ENCODE measurements at regions of chr3 and their contacts with region 1.

Region 1: GRCh38 chr3:111691293-111691909 is 96.3 kb upstream of the ZBED2 start:
- DNase-seq: peak; percentile 47
- H3K4me3 ChIP-seq: no peak overlapping the region; a peak in 1 of 4 replicates
- H3K27ac ChIP-seq: peak overlapping the region in 1 of 2 experiments; percentile 75; a peak in 2 of 4 replicates
- H3K4me1 ChIP-seq: peaks cover 3 to 37% of the 10 kb centered on the region in 2 experiments
- H3K27me3 ChIP-seq: no peaks in the 10 kb centered on the region
- CTCF ChIP-seq: peak; percentile 74
- EP300 ChIP-seq: no peak
- RAD21 ChIP-seq: peak; percentile 74

Region 2: DNA sequence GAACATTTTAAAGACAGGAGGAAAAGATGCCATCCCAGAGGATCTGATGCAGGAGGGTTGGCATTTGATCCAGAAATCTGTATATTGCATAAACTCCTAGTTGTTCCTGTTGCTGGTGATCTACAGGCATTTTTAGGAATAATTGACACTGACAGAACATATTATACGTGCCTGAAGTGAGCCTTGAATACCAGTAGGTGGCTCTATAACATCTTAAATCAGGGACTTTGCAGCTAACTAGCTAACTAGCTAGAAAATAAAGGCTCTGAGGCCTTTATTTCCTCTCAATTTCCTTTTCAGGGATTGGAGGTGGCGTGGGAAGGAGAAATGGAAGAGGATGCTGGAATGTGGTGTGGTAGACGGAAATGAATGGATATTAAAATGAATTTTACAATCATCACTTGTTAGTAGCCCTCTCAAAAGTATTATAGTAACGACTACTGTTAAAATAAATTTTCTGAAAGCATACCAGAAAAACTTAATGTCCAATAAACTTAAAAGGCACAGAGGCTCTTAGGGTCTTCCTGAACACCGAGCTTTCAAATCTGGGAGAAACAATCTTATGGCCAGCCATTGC is 22.4 kb before region 1 on chr3:
- CTCF ChIA-PET with region 1: interaction called, 19 read pairs
- POLR2A ChIA-PET with region 1: no interaction called
- DNase-seq: peak; percentile 48
- H3K4me3 ChIP-seq: no peak overlapping the region; a peak in 1 of 4 replicates
- H3K27ac ChIP-seq: peak overlapping the region in 1 of 2 experiments; percentile 80; a peak in 2 of 4 replicates
- H3K4me1 ChIP-seq: peaks cover 0 to 30% of the 10 kb centered on the region in 2 experiments
- H3K27me3 ChIP-seq: no peaks in the 10 kb centered on the region
- CTCF ChIP-seq: peak; percentile 90
- EP300 ChIP-seq: no peak; a peak in 1 of 4 replicates
- RAD21 ChIP-seq: peak; percentile 95

Region 3: DNA sequence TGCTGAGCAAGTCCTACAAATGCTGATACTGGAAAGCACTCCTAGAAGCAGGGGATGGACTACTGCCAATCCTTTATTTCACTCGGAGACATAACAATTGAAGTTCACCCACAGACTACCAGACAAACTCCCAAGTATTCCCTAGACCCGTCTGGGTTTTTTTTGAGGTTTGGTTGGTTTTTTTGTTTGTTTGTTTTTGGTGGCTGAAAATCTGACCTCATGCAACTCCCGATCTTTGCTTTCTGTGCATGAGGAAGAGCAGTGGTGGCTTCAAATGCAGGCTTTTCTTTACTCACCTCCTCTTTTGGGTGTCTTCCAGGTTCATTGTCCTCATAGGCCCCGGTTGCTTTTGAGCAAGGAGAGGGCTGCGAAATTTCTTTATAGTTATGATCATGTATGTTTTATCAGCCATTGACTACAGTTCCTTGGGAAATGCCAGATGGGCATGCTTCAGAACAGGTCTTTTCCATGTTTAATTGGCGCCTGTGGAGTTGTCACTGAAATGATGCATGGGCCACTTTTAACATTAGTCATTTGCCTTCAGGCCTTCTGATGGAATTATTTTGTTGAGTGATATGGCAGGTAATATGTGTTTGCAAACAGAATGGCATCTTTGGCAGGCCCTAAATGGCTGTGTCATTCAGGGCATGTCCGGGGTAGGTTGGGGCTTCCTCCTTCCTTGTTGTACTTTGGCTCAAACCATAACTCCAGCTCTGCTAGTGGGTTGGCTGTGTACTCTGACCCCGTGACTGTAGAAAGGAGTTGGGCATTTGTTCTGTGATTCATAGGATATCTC is 15.0 kb before region 1 on chr3:
- CTCF ChIA-PET with region 1: interaction called, 12 read pairs
- POLR2A ChIA-PET with region 1: no interaction called
- DNase-seq: no peak
- H3K4me3 ChIP-seq: peak overlapping the region; percentile 74 to 77
- H3K27ac ChIP-seq: peak overlapping the region; percentile 77 to 86
- H3K4me1 ChIP-seq: peaks cover 0 to 26% of the 10 kb centered on the region in 2 experiments; a peak in 2 of 4 replicates
- H3K27me3 ChIP-seq: no peaks in the 10 kb centered on the region
- CTCF ChIP-seq: no peak
- EP300 ChIP-seq: peak in 1 of 2 experiments; percentile 70; a peak in 2 of 4 replicates
- RAD21 ChIP-seq: no peak

Region 4: DNA sequence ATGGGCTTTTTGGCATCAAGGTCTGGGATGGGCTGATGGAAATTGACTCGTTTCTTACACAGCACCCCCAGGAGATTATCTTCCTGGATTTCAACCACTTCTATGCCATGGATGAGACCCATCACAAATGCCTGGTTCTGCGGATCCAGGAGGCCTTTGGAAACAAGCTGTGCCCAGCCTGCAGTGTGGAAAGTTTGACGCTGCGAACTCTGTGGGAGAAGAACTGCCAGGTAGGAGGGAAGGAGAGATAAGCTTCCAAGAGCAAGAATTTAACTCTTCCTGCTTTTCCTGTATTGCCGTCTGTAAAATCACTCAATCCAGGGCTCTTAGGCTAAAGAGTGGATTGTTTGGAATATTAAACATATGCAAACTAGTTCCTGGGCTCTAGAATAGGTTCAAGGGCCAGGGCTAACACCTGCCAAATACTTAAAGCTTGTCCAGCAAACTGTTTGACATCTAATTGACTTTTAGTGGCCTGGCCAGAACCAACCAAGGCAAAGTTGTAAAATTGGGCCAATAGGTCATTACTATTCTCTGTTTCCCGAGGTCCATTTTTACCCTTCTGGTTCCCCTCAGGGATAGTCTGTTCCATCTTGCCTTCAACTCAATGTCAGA is 16.9 kb after region 1 on chr3:
- CTCF ChIA-PET with region 1: interaction called, 19 read pairs
- POLR2A ChIA-PET with region 1: no interaction called
- DNase-seq: no peak
- H3K4me3 ChIP-seq: no peak overlapping the region
- H3K27ac ChIP-seq: no peak overlapping the region
- H3K4me1 ChIP-seq: peaks cover 0 to 11% of the 10 kb centered on the region in 2 experiments; a peak in 1 of 4 replicates
- H3K27me3 ChIP-seq: no peaks in the 10 kb centered on the region
- CTCF ChIP-seq: no peak
- EP300 ChIP-seq: no peak
- RAD21 ChIP-seq: no peak

Region 5: DNA sequence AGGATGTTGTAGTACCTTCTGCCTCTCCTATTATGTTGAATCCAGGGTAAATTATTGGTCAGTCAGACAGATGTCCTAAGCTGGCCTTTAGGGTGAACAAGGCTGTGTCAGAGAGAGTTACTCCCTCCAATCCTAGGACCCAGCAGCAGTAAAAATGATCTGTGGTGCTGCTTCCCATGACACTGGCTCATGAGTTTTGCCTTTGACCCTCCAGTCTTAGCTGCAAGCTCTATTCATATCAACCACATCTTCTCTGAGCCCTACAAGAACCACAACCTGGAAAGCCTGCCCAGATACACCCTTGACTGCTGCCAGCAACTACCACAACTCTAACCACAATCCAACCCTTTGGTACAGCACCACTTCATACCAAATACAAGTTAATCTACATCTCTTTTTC is 140.4 kb after region 1 on chr3:
- CTCF ChIA-PET with region 1: no interaction called
- POLR2A ChIA-PET with region 1: no interaction called
- DNase-seq: no peak
- H3K4me3 ChIP-seq: no peak overlapping the region
- H3K27ac ChIP-seq: no peak overlapping the region
- H3K4me1 ChIP-seq: no peaks in the 10 kb centered on the region
- H3K27me3 ChIP-seq: no peaks in the 10 kb centered on the region
- CTCF ChIP-seq: no peak
- EP300 ChIP-seq: no peak
- RAD21 ChIP-seq: no peak

Region 6: GRCh38 chr3:111903067-111903511 is 211.7 kb after region 1 on chr3:
- CTCF ChIA-PET with region 1: no interaction called
- POLR2A ChIA-PET with region 1: no interaction called
- DNase-seq: no peak
- H3K4me3 ChIP-seq: no peak overlapping the region
- H3K27ac ChIP-seq: peak overlapping the region in 1 of 2 experiments; percentile 86; a peak in 3 of 4 replicates
- H3K4me1 ChIP-seq: peaks cover 0 to 25% of the 10 kb centered on the region in 2 experiments; a peak in 3 of 4 replicates
- H3K27me3 ChIP-seq: no peaks in the 10 kb centered on the region
- CTCF ChIP-seq: no peak
- EP300 ChIP-seq: peak in 1 of 2 experiments; percentile 66; a peak in 2 of 4 replicates
- RAD21 ChIP-seq: no peak

Region 7: DNA sequence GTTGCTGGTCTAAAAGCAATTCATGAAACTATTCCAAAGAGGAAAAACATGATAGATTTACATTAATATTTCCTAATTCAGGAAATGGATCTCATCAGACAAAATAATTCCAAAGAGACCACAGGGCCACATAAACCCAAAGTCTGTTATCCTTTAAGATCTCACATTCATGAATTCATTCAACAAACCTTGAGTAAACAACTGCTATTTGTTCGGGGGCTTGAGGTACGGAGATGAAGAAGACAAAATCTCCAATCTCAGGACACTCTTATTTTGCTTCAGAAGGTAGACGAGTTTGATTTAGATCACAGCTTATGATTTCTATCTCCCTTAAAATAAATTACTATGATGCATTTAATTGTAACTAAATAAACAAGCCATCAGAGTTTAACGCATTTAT is 374.4 kb after region 1 on chr3:
- CTCF ChIA-PET with region 1: no interaction called
- POLR2A ChIA-PET with region 1: no interaction called
- DNase-seq: no peak
- H3K4me3 ChIP-seq: no peak overlapping the region
- H3K27ac ChIP-seq: no peak overlapping the region
- H3K4me1 ChIP-seq: no peaks in the 10 kb centered on the region
- H3K27me3 ChIP-seq: no peaks in the 10 kb centered on the region
- CTCF ChIP-seq: no peak
- EP300 ChIP-seq: no peak
- RAD21 ChIP-seq: no peak

Measured in SK-N-SH (cell line).